ENCODE measurements at regions of chr14 and their contacts with region 1.

Region 1: DNA sequence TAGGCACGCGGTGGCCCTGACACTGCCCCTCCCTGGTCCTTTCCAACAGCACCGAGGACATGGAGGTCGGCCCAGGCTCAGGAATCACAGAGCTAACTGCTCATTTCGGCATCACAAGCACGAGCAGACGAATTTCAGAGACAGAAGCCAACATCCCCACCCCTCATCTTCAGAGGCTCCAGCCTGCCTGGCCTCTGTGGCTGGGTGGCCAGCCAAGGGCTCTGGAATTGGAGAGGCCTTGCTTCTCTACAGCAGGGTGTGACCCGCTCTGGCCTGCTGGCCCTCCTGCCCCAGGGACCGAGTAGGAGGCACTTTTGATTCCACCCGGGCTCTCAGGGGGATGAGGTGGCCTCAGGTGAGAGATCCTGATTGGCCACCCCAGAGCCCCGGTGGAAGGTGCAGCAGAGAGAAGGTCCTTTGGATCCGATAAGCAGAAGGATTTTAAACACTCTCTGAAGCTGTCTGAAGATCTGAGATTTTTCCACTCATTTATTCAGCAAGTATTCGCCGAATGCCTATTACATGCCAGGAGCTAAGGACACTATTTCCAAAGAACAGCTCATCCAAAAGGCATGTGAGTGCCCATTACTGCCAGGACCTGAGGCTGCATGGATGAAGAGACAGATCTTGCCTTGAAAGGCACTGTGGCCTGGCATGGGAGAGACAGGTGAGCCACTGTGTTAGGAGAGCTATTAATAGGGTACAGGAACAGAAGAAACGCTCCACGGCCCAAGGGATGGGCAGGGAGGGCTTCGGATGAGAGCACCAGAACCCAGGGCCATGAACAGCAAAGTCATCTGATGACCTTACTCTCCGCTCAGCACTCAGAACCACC is 10.2 kb downstream of the BAG5 start:
- DNase-seq: peak; percentile 73 to 78
- H3K4me3 ChIP-seq: no peak overlapping the region
- H3K27ac ChIP-seq: 0 out of 2 replicates have a peak overlapping the region, but pooled peaks have one; percentile 1
- H3K4me1 ChIP-seq: peaks cover 12% of the 10 kb centered on the region; the same call in 1 of the 2 replicates
- H3K27me3 ChIP-seq: no peaks in the 10 kb centered on the region
- CTCF ChIP-seq: no peak

Region 2: DNA sequence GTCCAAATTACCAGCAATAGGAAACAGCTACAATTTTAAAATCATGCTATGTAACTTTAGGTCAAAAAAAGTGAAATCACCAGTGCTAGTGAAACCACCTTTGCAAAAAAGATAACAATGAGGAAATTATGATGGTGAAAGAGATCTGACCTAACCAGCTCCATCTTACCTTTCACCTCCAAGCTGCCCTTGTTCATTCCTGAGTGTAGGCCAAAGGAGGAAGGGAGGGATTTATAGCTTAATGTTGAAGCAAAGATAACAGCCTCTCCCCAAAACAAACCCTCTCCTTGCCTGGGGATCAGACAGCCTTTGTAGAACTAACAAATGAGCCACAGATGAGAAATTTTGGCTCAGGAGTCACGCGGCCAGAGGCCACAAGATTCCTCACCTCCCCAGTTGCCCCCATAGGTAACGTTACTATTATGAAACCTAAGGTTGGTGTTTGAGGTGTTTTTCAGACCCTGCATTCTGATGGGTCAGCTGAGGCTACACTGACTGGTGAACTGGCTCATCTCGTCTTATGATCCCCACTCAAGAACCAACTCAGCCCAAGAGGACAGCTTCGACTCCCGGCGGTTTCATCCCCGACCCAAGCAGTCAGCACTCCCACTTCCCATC is 301.2 kb before region 1 on chr14:
- CTCF ChIA-PET with region 1: no interaction called
- POLR2A ChIA-PET with region 1: interaction called, 18 read pairs
- intact Hi-C with region 1: no loop called
- DNase-seq: peak; percentile 36 to 100
- H3K4me3 ChIP-seq: peak overlapping the region; percentile 4; the same call in 1 of the 2 replicates
- H3K27ac ChIP-seq: peak overlapping the region; percentile 80
- H3K4me1 ChIP-seq: peaks cover 94% of the 10 kb centered on the region
- H3K27me3 ChIP-seq: no peaks in the 10 kb centered on the region
- CTCF ChIP-seq: no peak

Region 3: GRCh38 chr14:103576371-103577024 is 24.3 kb after region 1 on chr14:
- CTCF ChIA-PET with region 1: no interaction called
- POLR2A ChIA-PET with region 1: no interaction called
- intact Hi-C with region 1: no loop called
- DNase-seq: peak; percentile 97
- H3K4me3 ChIP-seq: no peak overlapping the region
- H3K27ac ChIP-seq: peak overlapping the region; percentile 40
- H3K4me1 ChIP-seq: peaks cover 24% of the 10 kb centered on the region
- H3K27me3 ChIP-seq: no peaks in the 10 kb centered on the region
- CTCF ChIP-seq: no peak

Region 4: GRCh38 chr14:103606963-103607668 is 54.9 kb after region 1 on chr14:
- CTCF ChIA-PET with region 1: no interaction called
- POLR2A ChIA-PET with region 1: no interaction called
- intact Hi-C with region 1: no loop called
- DNase-seq: no peak
- H3K4me3 ChIP-seq: no peak overlapping the region
- H3K27ac ChIP-seq: no peak overlapping the region
- H3K4me1 ChIP-seq: no peaks in the 10 kb centered on the region
- H3K27me3 ChIP-seq: no peaks in the 10 kb centered on the region
- CTCF ChIP-seq: no peak